ENCODE measurements at regions of chr6 and their contacts with region 1.

Region 1: DNA sequence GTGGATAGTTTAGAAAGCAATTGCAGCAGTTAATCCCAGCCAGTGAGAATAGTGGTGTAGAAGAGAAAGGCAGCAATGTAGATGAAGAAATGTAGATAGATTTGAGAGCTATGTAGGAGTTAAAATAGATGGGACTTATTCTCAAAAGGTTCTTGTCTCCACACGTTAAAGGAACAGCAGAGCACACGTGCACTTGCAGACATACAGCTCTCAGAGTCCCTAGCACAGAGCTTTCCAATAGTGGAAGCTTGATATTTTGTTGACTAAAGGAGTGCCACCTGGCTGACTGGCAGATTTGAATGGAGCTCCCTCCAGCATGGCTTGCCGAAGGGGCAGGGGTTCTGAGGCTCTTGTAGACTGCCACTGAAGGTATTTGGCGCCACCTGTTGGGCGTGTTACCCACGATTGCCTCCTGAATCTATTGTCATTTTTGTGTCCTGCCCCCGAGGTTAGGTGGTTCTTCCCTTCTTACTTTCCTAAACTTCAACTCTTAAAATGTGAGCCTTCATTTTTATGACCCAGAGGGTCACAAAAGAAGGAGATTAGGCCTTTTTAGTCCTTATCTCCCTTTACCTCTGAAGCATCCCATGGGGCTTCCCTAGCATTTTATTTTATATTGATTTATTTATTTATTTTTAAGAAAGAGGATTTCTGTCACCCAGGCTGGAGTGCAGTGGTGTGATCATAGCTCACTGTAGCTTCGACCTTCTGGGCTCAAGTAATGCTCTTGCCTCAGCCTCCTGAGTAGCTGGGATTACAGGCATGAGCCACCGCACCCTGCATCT is 16.4 kb downstream of the BRD2 start:
- DNase-seq: peak; percentile 98
- ATAC-seq: peak; percentile 84
- H3K4me3 Mint-ChIP-seq: no peak overlapping the region
- H3K27ac Mint-ChIP-seq: peak overlapping the region; percentile 68
- H3K4me1 Mint-ChIP-seq: peaks cover 18% of the 10 kb centered on the region
- H3K27me3 Mint-ChIP-seq: no peaks in the 10 kb centered on the region
- CTCF ChIP-seq: peak; percentile 92

Region 2: DNA sequence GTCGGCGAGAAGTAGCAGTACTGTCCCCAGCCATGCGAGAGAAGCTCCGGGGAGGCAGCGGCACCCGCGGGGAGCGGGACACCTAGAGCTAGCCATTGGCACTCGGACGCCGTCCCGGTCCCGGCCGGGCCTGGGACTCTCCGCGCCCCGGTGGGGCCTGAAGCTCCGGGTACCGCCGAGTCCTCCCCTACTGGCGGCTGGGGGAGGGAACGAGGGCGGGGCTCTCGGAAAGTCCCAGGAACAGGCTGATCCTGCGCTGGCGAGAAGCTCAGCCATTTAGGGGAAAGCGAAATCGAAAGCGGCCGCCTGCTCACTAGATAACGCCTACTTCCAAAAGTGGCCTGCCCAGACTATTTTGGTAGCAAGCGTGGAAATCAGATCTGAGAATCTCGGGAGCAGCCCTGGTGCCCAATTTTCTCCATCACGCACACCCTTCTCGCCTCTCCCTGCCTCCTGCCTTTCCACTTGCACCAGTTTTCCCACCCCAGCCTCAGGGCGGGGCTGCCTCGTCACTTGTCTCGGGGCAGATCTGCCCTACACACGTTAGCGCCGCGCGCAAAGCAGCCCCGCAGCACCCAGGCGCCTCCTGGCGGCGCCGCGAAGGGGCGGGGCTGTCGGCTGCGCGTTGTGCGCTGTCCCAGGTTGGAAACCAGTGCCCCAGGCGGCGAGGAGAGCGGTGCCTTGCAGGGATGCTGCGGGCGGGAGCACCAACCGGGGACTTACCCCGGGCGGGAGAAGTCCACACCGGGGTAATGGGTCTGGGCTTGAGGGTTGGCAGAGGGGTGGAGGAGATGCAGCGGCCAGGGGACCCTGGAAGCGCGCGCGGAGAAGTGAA is 131.0 kb before region 1 on chr6 and contains the starts of genes PSMB9 and TAP1:
- CTCF ChIA-PET with region 1: interaction called, 14 read pairs
- POLR2A ChIA-PET with region 1: interaction called, 4 read pairs
- intact Hi-C with region 1: no loop called
- DNase-seq: peak; percentile 99
- ATAC-seq: peak; percentile 84
- H3K4me3 Mint-ChIP-seq: peak within 1 kb of the TSS; percentile 94
- H3K27ac Mint-ChIP-seq: peak within 1 kb of the TSS; percentile 100
- H3K4me1 Mint-ChIP-seq: peaks cover 52% of the 10 kb centered on the region
- H3K27me3 Mint-ChIP-seq: no peaks in the 10 kb centered on the region
- CTCF ChIP-seq: peak; percentile 67
- total RNA-seq, gene PSMB9: 219 to 229 TPM
- total RNA-seq, gene TAP1: 210 to 211 TPM

Region 3: GRCh38 chr6:32894080-32895005 is 90.5 kb before region 1 on chr6:
- CTCF ChIA-PET with region 1: interaction called, 60 read pairs
- POLR2A ChIA-PET with region 1: interaction called, 19 read pairs
- intact Hi-C with region 1: no loop called
- DNase-seq: peak; percentile 95
- ATAC-seq: peak; percentile 99
- H3K4me3 Mint-ChIP-seq: peak overlapping the region; percentile 96
- H3K27ac Mint-ChIP-seq: peak overlapping the region; percentile 96
- H3K4me1 Mint-ChIP-seq: peaks cover 35% of the 10 kb centered on the region
- H3K27me3 Mint-ChIP-seq: no peaks in the 10 kb centered on the region
- CTCF ChIP-seq: no peak

Region 4: DNA sequence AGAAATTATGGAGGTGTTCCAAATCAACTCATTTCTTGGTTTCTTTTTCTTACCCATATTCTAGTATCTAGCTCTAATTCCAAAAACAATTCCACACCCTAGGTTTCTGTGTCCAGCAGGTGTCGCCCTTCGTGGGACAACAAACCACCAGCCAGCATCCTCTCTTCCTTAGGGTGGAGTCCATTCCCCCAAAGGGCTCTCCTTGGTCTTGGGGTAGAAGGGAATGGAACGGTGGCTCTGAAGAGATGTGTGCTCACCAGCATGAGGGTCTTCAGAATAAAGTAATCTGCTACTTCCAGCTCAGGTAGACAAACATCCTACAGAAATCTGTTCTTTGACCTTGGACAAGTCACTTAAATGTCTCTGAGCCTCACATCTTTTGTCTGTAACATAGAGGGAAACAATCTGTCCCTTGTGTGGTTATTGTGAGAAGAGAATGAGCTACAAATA is 51.1 kb before region 1 on chr6:
- CTCF ChIA-PET with region 1: interaction called, 364 read pairs
- POLR2A ChIA-PET with region 1: interaction called, 392 read pairs
- intact Hi-C with region 1: loop called (anchors 2 kb)
- DNase-seq: peak; percentile 87
- ATAC-seq: peak; percentile 70
- H3K4me3 Mint-ChIP-seq: no peak overlapping the region
- H3K27ac Mint-ChIP-seq: no peak overlapping the region
- H3K4me1 Mint-ChIP-seq: peaks cover 14% of the 10 kb centered on the region
- H3K27me3 Mint-ChIP-seq: no peaks in the 10 kb centered on the region
- CTCF ChIP-seq: peak; percentile 81

Region 5: GRCh38 chr6:32964776-32965175 is 20.0 kb before region 1 on chr6:
- CTCF ChIA-PET with region 1: interaction called, 112 read pairs
- POLR2A ChIA-PET with region 1: interaction called, 852 read pairs
- intact Hi-C with region 1: no loop called
- DNase-seq: no peak
- ATAC-seq: no peak
- H3K4me3 Mint-ChIP-seq: no peak overlapping the region
- H3K27ac Mint-ChIP-seq: no peak overlapping the region
- H3K4me1 Mint-ChIP-seq: peaks cover 47% of the 10 kb centered on the region
- H3K27me3 Mint-ChIP-seq: no peaks in the 10 kb centered on the region
- CTCF ChIP-seq: no peak

Region 6: DNA sequence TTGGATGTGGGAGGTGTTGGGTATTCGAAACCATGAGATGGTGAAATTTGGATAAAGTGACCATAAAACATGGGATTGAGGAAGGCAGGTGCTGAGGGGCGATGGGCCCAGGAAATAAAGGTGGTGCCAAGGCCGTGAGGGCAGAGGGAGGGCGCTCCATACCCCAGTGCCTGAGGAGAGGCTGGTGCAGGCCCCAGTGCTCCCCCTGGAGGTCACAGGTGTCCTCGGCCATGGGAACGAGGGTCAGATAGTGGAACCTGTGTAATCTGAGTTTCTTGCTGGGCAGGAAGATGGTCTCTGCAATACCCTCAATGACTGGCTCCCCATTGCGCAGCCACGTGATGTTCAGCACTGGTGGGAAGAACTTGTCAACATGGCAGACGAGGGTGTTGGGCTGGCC is 107.2 kb after region 1 on chr6:
- CTCF ChIA-PET with region 1: interaction called, 11 read pairs
- POLR2A ChIA-PET with region 1: no interaction called
- intact Hi-C with region 1: no loop called
- DNase-seq: peak; percentile 84
- ATAC-seq: peak; percentile 99
- H3K4me3 Mint-ChIP-seq: no peak overlapping the region
- H3K27ac Mint-ChIP-seq: no peak overlapping the region
- H3K4me1 Mint-ChIP-seq: no peaks in the 10 kb centered on the region
- H3K27me3 Mint-ChIP-seq: peaks cover 2% of the 10 kb centered on the region
- CTCF ChIP-seq: peak; percentile 86

Region 7: GRCh38 chr6:33391278-33391921 is 406.6 kb after region 1 on chr6 and contains the start of gene KIFC1:
- CTCF ChIA-PET with region 1: no interaction called
- POLR2A ChIA-PET with region 1: no interaction called
- intact Hi-C with region 1: no loop called
- DNase-seq: peak; percentile 99
- ATAC-seq: peak; percentile 91
- H3K4me3 Mint-ChIP-seq: peak within 1 kb of the TSS; percentile 89
- H3K27ac Mint-ChIP-seq: peak within 1 kb of the TSS; percentile 93
- H3K4me1 Mint-ChIP-seq: peaks cover 36% of the 10 kb centered on the region
- H3K27me3 Mint-ChIP-seq: no peaks in the 10 kb centered on the region
- CTCF ChIP-seq: peak; percentile 96
- total RNA-seq, gene KIFC1: 93.4 to 96.0 TPM